ENCODE measurements at regions of chr6 and their contacts with region 1.

Region 1: DNA sequence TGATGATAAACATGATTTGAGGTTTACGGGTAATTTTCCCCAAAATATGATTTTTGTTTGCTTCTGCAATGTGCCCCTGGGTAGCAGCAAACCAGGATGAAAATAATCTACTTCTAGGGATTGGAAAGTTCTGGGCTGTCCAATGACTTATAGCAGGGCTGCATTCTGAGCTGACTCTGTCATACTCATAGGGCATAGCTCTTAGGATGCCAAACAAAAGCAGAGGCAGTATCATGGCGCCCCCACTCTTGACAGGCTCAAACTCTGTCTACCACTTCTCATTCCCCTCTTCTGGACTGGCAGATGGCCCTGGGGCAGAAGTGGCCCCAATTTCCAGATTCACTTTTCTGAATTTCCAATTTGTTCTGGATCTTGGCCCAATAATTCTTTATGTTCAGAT is 10.3 kb downstream of the SERPINB1 start:
- DNase-seq: no peak
- ATAC-seq: peak in 3 of 4 donors; percentile 23 to 57 (median 36)
- H3K4me3 ChIP-seq: no peak overlapping the region
- H3K27ac ChIP-seq: no peak overlapping the region
- H3K4me1 ChIP-seq: peaks cover 0 to 8% (median 0%) of the 10 kb centered on the region in 12 donors
- H3K27me3 ChIP-seq: no peaks in the 10 kb centered on the region
- CTCF ChIP-seq: no peak
- POLR2A ChIP-seq: no peak

Region 2: GRCh38 chr6:2127484-2127911 is 703.9 kb before region 1 on chr6:
- intact Hi-C with region 1: no loop called
- DNase-seq: peak; percentile 51 to 76 (median 61)
- ATAC-seq: peak; percentile 88 to 93 (median 92)
- H3K4me3 ChIP-seq: peak overlapping the region in 7 of 12 donors; percentile 19 to 39 (median 30)
- H3K27ac ChIP-seq: peak overlapping the region; percentile 28 to 76 (median 58)
- H3K4me1 ChIP-seq: peaks cover 0 to 27% (median 11%) of the 10 kb centered on the region in 12 donors
- H3K27me3 ChIP-seq: no peaks in the 10 kb centered on the region
- CTCF ChIP-seq: no peak
- POLR2A ChIP-seq: peak in 1 of 2 donors; percentile 18

Region 3: GRCh38 chr6:2819978-2820377 is 11.4 kb before region 1 on chr6:
- intact Hi-C with region 1: loop called in 1 of 10 experiments (anchors 1 kb)
- DNase-seq: no peak
- ATAC-seq: no peak
- H3K4me3 ChIP-seq: no peak overlapping the region
- H3K27ac ChIP-seq: no peak overlapping the region
- H3K4me1 ChIP-seq: peaks cover 5 to 39% (median 28%) of the 10 kb centered on the region in 12 donors
- H3K27me3 ChIP-seq: no peaks in the 10 kb centered on the region
- CTCF ChIP-seq: no peak
- POLR2A ChIP-seq: no peak

Measured in heart left ventricle (tissue), 16 donors.